GM12878 (cell line): ENCODE measurements at regions of chr2 and their contacts with region 1.

Region 1: GRCh38 chr2:73071360-73072133 is at the start of gene SFXN5:
- DNase-seq: peak; percentile 40
- ATAC-seq: peak; percentile 95
- H3K4me3 ChIP-seq: peak within 1 kb of the TSS; percentile 77
- H3K27ac ChIP-seq: peak within 1 kb of the TSS; percentile 86
- H3K4me1 ChIP-seq: no peaks in the 10 kb centered on the region
- H3K27me3 ChIP-seq: peaks cover 0 to under 1% of the 10 kb centered on the region in 2 experiments; a peak in 2 of 4 replicates
- CTCF ChIP-seq: 0 out of 6 replicates have a peak, but pooled peaks of 2 of the 3 experiments have one; percentile 7 to 28
- EP300 ChIP-seq: peak in 1 of 2 experiments; percentile 17; a peak in 1 of 4 replicates
- POLR2A ChIP-seq: peak; percentile 77
- RAD21 ChIP-seq: no peak
- polyA plus RNA-seq, gene SFXN5: 3.3 to 4.0 TPM

Region 2: DNA sequence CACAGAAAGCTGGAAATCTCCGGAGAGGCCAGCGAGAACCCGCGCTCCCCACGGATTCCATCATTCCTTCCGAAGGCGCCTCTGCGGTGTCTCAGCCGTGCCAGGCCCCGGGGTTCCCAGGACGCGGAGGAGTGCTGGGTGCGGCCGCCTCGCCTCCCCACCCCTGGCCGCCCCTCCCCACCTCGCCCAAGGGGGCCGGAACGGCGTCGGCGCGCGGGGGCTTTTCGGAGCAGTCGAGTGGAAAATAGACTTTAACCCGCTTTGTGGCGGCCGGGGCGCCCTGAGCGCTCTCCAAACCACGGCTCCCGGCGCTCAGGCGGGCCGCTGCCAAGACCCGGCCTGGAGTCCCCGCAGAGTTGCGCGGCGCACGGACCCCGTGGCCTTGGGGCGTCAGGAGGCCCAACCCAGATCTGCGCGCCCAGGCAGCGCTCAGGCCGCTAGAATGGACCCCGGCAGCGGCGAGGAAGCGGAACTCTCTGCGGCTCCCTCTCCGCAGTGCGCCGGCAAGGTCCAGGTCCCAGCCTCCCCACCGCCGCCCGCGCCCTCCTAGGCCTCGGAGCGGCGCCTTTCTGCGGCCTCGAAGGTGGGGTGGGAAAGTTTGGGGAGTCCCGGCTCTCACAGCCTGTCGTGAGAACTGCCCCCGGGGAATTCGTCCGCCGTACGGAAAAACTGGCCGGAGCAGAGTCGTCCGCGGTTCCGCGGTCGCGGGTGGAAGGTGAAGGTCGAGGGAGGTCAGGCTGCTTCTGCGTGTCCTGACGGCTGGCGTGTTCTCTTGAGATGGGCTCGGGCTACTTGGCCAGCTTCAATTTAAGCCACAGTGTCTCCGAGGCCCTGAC is 155.4 kb before region 1 on chr2:
- CTCF ChIA-PET with region 1: no interaction called
- POLR2A ChIA-PET with region 1: no interaction called
- RAD21 ChIA-PET with region 1: no interaction called
- SMC1A ChIA-PET with region 1: no interaction called
- in situ Hi-C with region 1: no loop called
- intact Hi-C with region 1: loop called (anchors 5 kb)
- DNase-seq: no peak
- ATAC-seq: peak; percentile 85
- H3K4me3 ChIP-seq: peak overlapping the region; percentile 75
- H3K27ac ChIP-seq: peak overlapping the region; percentile 48
- H3K4me1 ChIP-seq: peaks cover 9% of the 10 kb centered on the region
- H3K27me3 ChIP-seq: peaks cover 8 to 52% of the 10 kb centered on the region in 2 experiments
- CTCF ChIP-seq: no peak
- EP300 ChIP-seq: peak in 1 of 2 experiments; percentile 28; a peak in 1 of 4 replicates
- POLR2A ChIP-seq: 0 out of 2 replicates have a peak, but pooled peaks have one; percentile 35
- RAD21 ChIP-seq: no peak

Region 3: DNA sequence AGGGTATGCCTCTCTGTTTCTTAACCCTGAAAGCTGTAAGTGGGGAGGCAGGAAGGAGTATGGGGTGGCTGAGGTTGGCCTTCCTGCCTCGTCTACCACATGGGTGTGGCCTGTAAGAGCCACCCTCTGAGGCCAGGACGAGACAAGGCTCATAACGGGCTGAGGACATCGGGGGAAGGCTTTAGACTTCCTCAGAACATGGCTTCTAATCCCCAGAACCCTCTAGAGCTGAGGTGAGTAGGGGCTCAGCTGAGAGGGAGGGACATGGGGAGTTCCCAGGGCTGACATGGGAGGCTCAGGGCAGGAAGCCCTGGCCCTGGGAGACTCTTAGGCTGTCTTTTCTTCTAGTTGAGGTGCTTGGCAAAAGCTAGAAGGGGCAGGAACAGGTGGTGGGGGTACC is 117.6 kb before region 1 on chr2:
- CTCF ChIA-PET with region 1: no interaction called
- POLR2A ChIA-PET with region 1: no interaction called
- RAD21 ChIA-PET with region 1: no interaction called
- SMC1A ChIA-PET with region 1: no interaction called
- in situ Hi-C with region 1: no loop called
- intact Hi-C with region 1: no loop called
- DNase-seq: no peak
- ATAC-seq: peak; percentile 67
- H3K4me3 ChIP-seq: no peak overlapping the region
- H3K27ac ChIP-seq: 0 out of 2 replicates have a peak overlapping the region, but pooled peaks have one; percentile 24
- H3K4me1 ChIP-seq: no peaks in the 10 kb centered on the region
- H3K27me3 ChIP-seq: no peaks in the 10 kb centered on the region
- CTCF ChIP-seq: no peak
- EP300 ChIP-seq: no peak
- POLR2A ChIP-seq: no peak; the same call in 1 of the 2 replicates
- RAD21 ChIP-seq: no peak

Region 4: DNA sequence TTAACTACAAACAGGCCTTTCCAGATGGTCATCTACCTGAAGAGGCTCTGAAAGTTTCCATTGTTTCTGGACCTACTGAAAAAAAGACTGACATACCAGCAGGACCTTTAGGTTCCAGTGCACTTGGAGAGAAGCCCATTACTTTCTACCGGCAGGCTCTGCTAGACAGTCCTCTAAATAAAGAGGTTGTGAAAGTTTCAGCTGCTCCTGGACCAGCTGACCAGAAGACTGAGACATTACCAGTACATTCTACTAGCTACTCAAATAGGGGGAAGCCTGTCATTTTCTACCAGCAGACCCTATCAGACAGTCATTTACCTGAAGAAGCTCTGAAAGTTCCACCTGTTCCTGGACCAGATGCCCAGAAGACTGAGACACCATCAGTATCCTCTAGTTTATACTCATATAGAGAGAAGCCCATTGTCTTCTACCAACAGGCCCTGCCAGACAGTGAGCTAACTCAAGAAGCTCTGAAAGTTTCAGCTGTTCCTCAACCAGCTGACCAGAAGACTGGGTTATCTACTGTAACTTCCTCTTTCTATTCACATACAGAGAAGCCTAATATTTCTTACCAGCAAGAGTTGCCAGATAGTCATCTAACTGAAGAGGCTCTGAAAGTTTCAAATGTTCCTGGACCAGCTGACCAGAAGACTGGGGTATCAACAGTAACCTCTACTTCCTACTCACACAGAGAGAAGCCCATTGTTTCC is 379.9 kb after region 1 on chr2:
- CTCF ChIA-PET with region 1: no interaction called
- POLR2A ChIA-PET with region 1: no interaction called
- RAD21 ChIA-PET with region 1: no interaction called
- SMC1A ChIA-PET with region 1: no interaction called
- in situ Hi-C with region 1: no loop called
- intact Hi-C with region 1: no loop called
- DNase-seq: peak; percentile 51
- ATAC-seq: peak; percentile 95
- H3K4me3 ChIP-seq: no peak overlapping the region
- H3K27ac ChIP-seq: 0 out of 2 replicates have a peak overlapping the region, but pooled peaks have one; percentile 12
- H3K4me1 ChIP-seq: peaks cover 18% of the 10 kb centered on the region
- H3K27me3 ChIP-seq: no peaks in the 10 kb centered on the region
- CTCF ChIP-seq: no peak
- EP300 ChIP-seq: no peak
- POLR2A ChIP-seq: no peak
- RAD21 ChIP-seq: no peak